ENCODE measurements at regions of chr7 and their contacts with region 1.

Region 1: DNA sequence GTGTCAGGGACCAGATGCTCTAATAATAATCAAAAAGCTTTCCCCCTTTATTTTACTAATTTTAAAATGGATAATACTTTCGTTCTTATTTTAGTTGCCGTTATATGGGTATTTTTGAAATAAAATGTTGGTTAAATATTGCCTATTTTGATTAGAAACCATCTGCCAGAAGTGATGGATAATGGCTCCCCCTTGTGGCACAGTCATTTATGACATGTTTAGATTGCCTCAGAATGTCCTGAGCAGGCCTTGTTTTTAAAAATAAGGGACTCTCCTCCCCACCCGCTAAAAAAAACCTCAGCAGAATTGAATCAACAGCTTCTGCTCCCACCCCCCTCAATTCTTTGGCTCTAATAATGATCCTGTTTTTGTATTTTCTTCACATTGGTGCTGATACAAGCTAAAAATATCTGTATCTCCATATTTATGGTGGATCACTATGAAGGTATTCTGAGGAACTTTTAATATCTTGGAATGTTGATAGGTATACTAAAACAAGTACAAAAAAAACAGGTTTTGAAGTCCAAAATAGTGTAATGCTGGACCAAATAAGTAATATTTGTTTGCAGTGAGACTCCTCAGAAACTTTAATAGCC is 38.8 kb downstream of the TMEM60 start:
- DNase-seq: peak; percentile 67 to 88
- H3K4me3 ChIP-seq: no peak overlapping the region
- H3K27ac ChIP-seq: peak overlapping the region in 1 of 5 donors; percentile 16
- H3K4me1 ChIP-seq: peaks cover 12 to 79% (median 44%) of the 10 kb centered on the region in 4 donors
- H3K27me3 ChIP-seq: no peaks in the 10 kb centered on the region
- CTCF ChIP-seq: peak in 5 of 7 experiments; percentile 56 to 81 (median 77)
- EP300 ChIP-seq: no peak
- POLR2A ChIP-seq: no peak

Region 2: GRCh38 chr7:77657427-77658224 is 101.8 kb before region 1 on chr7:
- intact Hi-C with region 1: loop called (anchors 10 kb)
- DNase-seq: peak in 1 of 2 donors; percentile 80
- H3K4me3 ChIP-seq: no peak overlapping the region
- H3K27ac ChIP-seq: no peak overlapping the region
- H3K4me1 ChIP-seq: peaks cover 5 to 23% (median 21%) of the 10 kb centered on the region in 4 donors
- H3K27me3 ChIP-seq: no peaks in the 10 kb centered on the region
- CTCF ChIP-seq: peak in 5 of 7 experiments; percentile 9 to 71 (median 29)
- EP300 ChIP-seq: no peak
- POLR2A ChIP-seq: no peak